Head of caudate nucleus (tissue), 42 donors: ENCODE measurements at regions of chr11 and their contacts with region 1.

Region 1: DNA sequence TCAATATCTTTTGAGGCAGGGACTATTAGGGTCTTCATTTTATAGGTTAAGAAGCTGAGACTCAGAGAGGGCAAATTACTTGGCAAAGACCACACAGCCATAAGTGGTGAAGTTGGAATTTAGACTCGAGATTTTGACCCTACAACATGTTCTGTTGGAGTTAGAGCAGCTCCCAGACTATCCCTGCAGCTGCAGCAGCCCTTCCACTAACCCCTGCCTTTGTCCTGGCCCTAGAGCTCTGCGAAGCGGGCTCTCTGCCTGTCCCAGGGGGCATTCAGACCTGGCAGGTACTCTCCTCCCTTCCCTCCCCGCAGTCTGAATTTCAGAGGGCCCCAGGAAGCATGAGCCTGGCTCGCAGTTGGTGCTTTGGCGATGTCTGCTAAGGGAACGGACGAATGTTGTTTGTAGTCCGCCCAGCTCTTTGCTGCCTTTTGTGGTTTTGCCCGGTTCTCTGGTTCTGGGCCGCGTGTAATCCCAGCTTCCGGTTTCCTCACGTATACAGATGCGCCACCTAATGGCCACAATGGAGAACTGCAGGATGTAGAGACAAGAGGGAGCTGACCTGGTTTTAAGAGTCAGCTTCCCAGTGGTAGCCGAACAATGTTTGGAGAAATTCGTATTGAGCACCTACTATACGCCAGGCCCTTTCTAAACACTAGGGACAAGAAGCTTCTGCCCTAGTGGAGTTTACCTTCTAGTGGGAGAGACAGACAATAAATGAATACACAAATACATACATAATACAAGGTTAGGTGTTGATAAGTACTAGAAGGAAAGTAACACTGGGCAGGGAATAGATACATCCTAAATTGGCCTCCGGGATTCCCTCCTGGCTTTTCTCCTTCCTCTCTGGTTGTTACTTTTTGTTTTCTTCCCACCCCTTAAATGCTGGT is 125.2 kb downstream of the ST3GAL4 start:
- DNase-seq: peak; percentile 56 to 95 (median 86)

Region 2: DNA sequence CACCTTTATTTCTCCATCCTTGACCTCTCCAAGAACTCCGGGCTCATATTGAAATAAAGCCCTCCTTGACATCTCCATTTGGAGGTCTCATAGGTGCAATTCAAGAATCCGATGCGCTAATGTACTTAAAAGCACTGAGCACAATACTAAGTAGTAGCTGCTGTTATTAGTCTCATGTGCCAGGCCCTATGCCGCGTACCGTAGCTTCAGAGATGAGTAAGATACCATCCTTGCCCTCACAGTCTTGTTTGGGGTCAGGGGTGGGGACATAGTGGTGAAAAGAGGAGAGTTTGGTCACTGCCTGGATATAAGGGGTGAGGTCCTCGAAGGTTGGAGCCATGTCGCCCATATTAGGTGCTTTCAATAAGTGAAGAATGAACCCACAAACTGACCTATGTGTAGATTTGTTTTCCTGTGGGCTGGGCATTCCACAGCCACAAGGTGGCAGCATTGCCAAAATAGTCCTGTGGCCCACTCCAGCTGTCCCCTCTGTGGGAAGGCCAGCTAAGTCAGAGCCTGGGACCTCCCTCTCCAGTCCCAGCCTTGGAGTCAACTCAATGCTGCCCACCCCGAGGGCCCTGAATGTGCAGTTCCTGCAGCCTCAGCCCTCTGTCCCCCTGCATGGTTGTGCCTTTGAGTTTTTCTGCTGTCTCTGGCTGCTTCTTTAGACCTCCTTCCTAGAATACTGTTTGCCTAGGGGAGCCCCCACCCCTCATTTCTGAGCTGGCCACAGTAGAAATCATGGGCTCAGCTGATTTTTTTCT is 170.2 kb before region 1 on chr11:
- intact Hi-C with region 1: loop called (anchors 5 kb)
- DNase-seq: peak in 41 of 42 donors; percentile 72 to 94 (median 84)

Region 3: GRCh38 chr11:126366065-126366785 is 114.4 kb before region 1 on chr11:
- intact Hi-C with region 1: no loop called
- DNase-seq: peak in 33 of 42 donors; percentile 33 to 78 (median 53)

Region 4: GRCh38 chr11:126440792-126441514 is 39.7 kb before region 1 on chr11:
- intact Hi-C with region 1: loop called (anchors 2 kb)
- DNase-seq: peak; percentile 79 to 94 (median 86)